ENCODE measurements at regions of chr2 and their contacts with region 1.

Region 1: GRCh38 chr2:238596571-238597551 is 170.1 kb downstream of the ASB1 start:
- DNase-seq: peak; percentile 71 to 85
- ATAC-seq: peak; percentile 84 to 88 (median 86)
- H3K4me3 ChIP-seq: no peak overlapping the region
- H3K27ac ChIP-seq: peak overlapping the region; percentile 66
- H3K4me1 ChIP-seq: peaks cover 6% of the 10 kb centered on the region
- H3K27me3 ChIP-seq: no peaks in the 10 kb centered on the region
- CTCF ChIP-seq: no peak

Region 2: GRCh38 chr2:238370823-238371372 is 226.0 kb before region 1 on chr2:
- intact Hi-C with region 1: loop called (anchors 10 kb)
- DNase-seq: peak; percentile 39 to 75
- ATAC-seq: peak; percentile 73 to 95 (median 88)
- H3K4me3 ChIP-seq: no peak overlapping the region
- H3K27ac ChIP-seq: no peak overlapping the region
- H3K4me1 ChIP-seq: no peaks in the 10 kb centered on the region
- H3K27me3 ChIP-seq: no peaks in the 10 kb centered on the region
- CTCF ChIP-seq: peak; percentile 73

Region 3: DNA sequence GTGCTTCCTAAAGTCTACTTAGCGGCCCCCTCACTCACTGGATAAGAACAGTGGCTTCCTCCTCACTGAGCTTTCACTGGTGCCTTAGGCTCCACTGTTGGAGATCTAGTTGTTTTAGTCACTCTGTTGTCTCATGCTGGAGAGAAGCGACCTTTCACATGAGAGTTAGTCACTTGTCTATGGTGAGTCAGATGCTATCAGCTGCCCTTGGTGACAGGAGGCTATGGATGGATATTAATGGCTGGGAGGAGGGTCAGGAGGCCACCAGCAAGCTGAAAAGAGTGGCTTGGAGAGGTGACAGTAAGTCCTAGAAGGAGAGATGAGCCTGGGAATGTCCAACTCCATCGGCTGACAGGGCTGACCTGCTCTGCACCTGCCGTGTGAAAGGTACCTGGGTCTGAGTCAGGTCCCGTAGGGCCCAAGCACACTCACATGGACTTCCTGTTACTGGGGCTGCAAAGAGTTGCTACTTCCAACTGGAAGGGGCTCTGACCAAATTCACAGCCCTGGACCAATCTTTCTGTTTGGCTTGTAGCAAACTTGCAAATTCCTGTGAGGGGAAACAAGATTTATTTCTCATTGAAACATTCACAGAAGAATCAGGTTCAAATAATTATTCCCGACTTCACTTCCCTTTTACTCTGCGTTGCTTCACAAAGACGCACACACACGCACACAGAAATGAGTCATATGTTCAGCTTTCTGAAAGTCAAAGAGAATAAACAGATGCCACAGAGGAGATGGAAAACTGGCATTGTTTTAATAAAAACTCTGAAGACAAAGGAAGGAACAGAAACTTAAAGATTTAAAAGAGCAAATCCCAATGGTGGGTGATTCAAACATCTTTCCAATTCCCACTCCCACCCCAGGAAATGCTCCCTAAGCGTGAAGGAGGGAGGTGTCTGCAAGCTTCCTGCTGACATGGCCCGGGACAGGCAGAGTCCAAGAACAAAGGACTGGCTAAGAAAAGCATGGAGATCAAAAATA is 47.5 kb after region 1 on chr2:
- intact Hi-C with region 1: no loop called
- DNase-seq: no peak
- ATAC-seq: peak; percentile 83 to 96 (median 89)
- H3K4me3 ChIP-seq: no peak overlapping the region
- H3K27ac ChIP-seq: peak overlapping the region; percentile 25
- H3K4me1 ChIP-seq: no peaks in the 10 kb centered on the region
- H3K27me3 ChIP-seq: peaks cover 0 to 12% (median 0%) of the 10 kb centered on the region in 3 donors
- CTCF ChIP-seq: no peak

Measured in psoas muscle (tissue), 8 donors.